PC-9 (cell line): ENCODE measurements at regions of chr3 and their contacts with region 1.

Region 1: GRCh38 chr3:14988988-14989394 is 41.6 kb downstream of the NR2C2 start:
- DNase-seq: no peak
- H3K4me3 ChIP-seq: no peak overlapping the region
- H3K27ac ChIP-seq: no peak overlapping the region
- H3K4me1 ChIP-seq: peaks cover 22% of the 10 kb centered on the region
- H3K27me3 ChIP-seq: no peaks in the 10 kb centered on the region
- CTCF ChIP-seq: no peak

Region 2: DNA sequence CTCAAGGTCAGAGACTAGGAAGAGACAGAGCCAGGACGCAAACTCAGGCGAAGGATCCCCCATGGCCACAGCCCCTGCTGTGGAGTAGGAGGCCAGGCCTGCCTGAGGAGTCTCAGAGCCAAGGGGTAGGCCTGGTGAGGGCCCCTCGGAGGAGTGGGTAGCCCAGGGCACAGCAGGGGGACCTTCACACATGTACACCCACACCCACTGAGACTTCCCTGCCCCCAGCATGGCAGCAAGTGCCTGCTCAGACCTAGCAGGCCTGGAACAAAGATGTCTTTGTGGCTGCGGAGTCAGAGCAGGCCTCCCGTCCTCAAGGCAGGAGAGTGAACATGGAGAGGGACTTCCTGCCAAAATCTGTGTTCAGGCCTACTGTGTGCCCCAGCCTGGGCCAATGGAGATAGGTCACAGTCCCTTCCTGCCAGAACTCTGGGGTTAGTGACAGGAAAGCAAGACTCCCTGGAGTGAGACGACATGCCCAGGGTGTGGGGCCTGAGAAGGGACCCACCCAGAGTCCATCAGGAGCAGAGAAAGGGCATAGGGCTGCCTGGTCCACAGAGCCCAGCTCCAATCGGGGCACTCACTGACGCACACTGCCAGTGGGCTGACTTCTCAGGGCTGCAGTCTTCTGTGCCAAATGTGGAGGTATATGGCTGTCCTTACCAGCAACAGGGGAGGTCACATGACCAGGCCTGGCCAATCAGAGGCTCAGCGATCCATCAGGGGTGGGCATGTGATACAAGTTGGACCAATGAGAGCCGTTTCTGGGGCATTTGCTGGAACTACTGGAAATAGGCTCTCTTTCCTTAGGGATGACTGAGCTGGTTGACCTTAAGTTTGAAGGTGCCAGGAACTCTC is 451.2 kb before region 1 on chr3:
- CTCF ChIA-PET with region 1: no interaction called
- POLR2A ChIA-PET with region 1: no interaction called
- intact Hi-C with region 1: no loop called
- DNase-seq: no peak
- H3K4me3 ChIP-seq: no peak overlapping the region
- H3K27ac ChIP-seq: no peak overlapping the region
- H3K4me1 ChIP-seq: no peaks in the 10 kb centered on the region
- H3K27me3 ChIP-seq: peaks cover 16% of the 10 kb centered on the region
- CTCF ChIP-seq: no peak

Region 3: GRCh38 chr3:14947886-14948555 is 41.0 kb before region 1 on chr3:
- CTCF ChIA-PET with region 1: no interaction called
- POLR2A ChIA-PET with region 1: interaction called, 12 read pairs
- intact Hi-C with region 1: loop called (anchors 5 kb)
- DNase-seq: peak; percentile 80 to 96
- H3K4me3 ChIP-seq: peak overlapping the region; percentile 99
- H3K27ac ChIP-seq: peak overlapping the region; percentile 97
- H3K4me1 ChIP-seq: peaks cover 20% of the 10 kb centered on the region; the same call in 1 of the 2 replicates
- H3K27me3 ChIP-seq: no peaks in the 10 kb centered on the region
- CTCF ChIP-seq: no peak

Region 4: DNA sequence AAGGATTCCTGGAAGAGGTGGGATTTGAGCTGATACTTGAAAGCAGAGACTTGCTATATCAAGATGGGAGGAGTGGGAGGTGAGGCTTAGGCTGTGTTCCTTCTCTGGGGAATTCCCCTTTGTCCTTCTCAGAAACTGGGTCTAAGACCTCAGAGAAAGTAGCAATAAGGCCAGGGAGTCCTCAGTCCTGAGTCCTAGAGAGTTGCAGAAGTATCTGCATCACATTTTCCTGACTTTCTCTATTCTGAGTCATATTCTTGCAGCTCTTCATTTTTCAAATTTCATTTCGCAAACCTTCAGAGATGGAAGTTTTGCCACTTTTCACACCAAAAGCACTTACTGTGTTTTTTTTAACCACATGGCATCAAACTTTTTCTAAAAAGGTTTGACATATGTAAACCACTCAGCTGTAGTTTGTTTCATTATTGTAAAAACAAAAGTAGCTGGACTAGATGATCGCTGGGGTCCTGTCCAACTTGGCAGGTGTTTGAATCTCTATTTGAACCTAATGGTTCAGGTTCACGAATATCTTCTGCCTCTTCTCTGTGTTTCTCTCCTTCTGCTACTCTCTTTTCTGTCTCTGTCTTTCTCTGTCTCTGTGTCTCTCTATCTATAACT is 511.2 kb after region 1 on chr3:
- CTCF ChIA-PET with region 1: no interaction called
- POLR2A ChIA-PET with region 1: interaction called, 17 read pairs
- intact Hi-C with region 1: no loop called
- DNase-seq: no peak
- H3K4me3 ChIP-seq: no peak overlapping the region
- H3K27ac ChIP-seq: no peak overlapping the region
- H3K4me1 ChIP-seq: no peaks in the 10 kb centered on the region
- H3K27me3 ChIP-seq: peaks cover 14% of the 10 kb centered on the region; the same call in 1 of the 2 replicates
- CTCF ChIP-seq: no peak